K562 (cell line): ENCODE measurements at regions of chr12 and their contacts with region 1.

Region 1: DNA sequence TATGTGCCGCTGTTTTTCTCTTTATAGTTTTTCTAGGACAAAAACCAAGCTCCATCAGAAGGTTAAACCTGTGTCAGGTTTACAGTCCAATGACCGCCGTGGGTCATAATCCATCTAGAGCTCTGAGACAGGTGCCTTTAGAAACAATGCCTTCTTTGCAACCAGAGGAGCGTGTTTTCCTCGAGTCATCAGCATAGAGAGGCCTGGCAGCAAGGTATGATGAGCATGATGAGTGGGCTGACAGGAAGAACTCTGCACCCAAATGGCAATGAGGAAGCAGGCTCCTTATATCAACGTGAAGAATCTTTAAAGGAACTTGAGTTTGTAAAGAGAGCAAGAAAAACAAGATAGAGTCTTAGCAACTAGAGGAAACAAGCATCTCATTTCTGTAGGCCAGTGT is 60.5 kb upstream of the NUDT4 start:
- DNase-seq: peak in 2 of 4 experiments; percentile 27 to 67
- ATAC-seq: peak; percentile 1; the same call in 1 of the 3 replicates
- H3K4me3 ChIP-seq: no peak overlapping the region
- H3K27ac ChIP-seq: peak overlapping the region; percentile 96
- H3K4me1 ChIP-seq: peaks cover 26 to 60% of the 10 kb centered on the region in 2 experiments
- H3K27me3 ChIP-seq: no peaks in the 10 kb centered on the region
- CTCF ChIP-seq: no peak
- EP300 ChIP-seq: peak; percentile 37
- POLR2A ChIP-seq: no peak
- RAD21 ChIP-seq: no peak

Region 2: GRCh38 chr12:92928962-92929915 is 388.0 kb before region 1 on chr12 and contains the start of gene EEA1:
- CTCF ChIA-PET with region 1: no interaction called
- POLR2A ChIA-PET with region 1: no interaction called
- in situ Hi-C with region 1: no loop called
- intact Hi-C with region 1: loop called (anchors 10 kb)
- DNase-seq: peak; percentile 97 to 99 (median 99)
- ATAC-seq: peak; percentile 96
- H3K4me3 ChIP-seq: peak within 1 kb of the TSS; percentile 74
- H3K27ac ChIP-seq: peak within 1 kb of the TSS; percentile 96
- H3K4me1 ChIP-seq: peaks cover 8 to 15% of the 10 kb centered on the region in 2 experiments; a peak in 3 of 5 replicates
- H3K27me3 ChIP-seq: no peaks in the 10 kb centered on the region
- CTCF ChIP-seq: peak in 2 of 3 experiments; percentile 52 to 75; a peak in 4 of 6 replicates
- EP300 ChIP-seq: no peak
- POLR2A ChIP-seq: peak; percentile 92
- RAD21 ChIP-seq: peak; percentile 20 to 30; a peak in 3 of 4 replicates
- polyA plus RNA-seq, gene EEA1: 3.5 to 4.8 TPM

Region 3: GRCh38 chr12:93098077-93098476 is 219.2 kb before region 1 on chr12:
- CTCF ChIA-PET with region 1: no interaction called
- POLR2A ChIA-PET with region 1: no interaction called
- in situ Hi-C with region 1: no loop called
- intact Hi-C with region 1: loop called (anchors 2 kb)
- DNase-seq: peak; percentile 37 to 81 (median 52)
- ATAC-seq: peak; percentile 87
- H3K4me3 ChIP-seq: no peak overlapping the region
- H3K27ac ChIP-seq: no peak overlapping the region
- H3K4me1 ChIP-seq: peaks cover 0 to 9% of the 10 kb centered on the region in 2 experiments; a peak in 2 of 5 replicates
- H3K27me3 ChIP-seq: no peaks in the 10 kb centered on the region
- CTCF ChIP-seq: peak; percentile 57 to 71 (median 57); a peak in 5 of 6 replicates
- EP300 ChIP-seq: no peak
- POLR2A ChIP-seq: no peak
- RAD21 ChIP-seq: peak; percentile 29 to 73; a peak in 3 of 4 replicates

Region 4: GRCh38 chr12:93243689-93244513 is 73.3 kb before region 1 on chr12:
- CTCF ChIA-PET with region 1: no interaction called
- POLR2A ChIA-PET with region 1: interaction called, 3 read pairs
- in situ Hi-C with region 1: no loop called
- intact Hi-C with region 1: loop called (anchors 5 kb)
- DNase-seq: peak in 2 of 4 experiments; percentile 34 to 60
- ATAC-seq: peak; percentile 79
- H3K4me3 ChIP-seq: no peak overlapping the region
- H3K27ac ChIP-seq: 0 out of 3 replicates have a peak overlapping the region, but pooled peaks have one; percentile 15
- H3K4me1 ChIP-seq: peaks cover 5 to 35% of the 10 kb centered on the region in 2 experiments; a peak in 3 of 5 replicates
- H3K27me3 ChIP-seq: no peaks in the 10 kb centered on the region
- CTCF ChIP-seq: no peak
- EP300 ChIP-seq: peak; percentile 57; the same call in 1 of the 2 replicates
- POLR2A ChIP-seq: no peak
- RAD21 ChIP-seq: no peak